ENCODE measurements at regions of chr5 and their contacts with region 1.

Region 1: GRCh38 chr5:115460472-115460871 is 84.1 kb downstream of the FEM1C start:
- DNase-seq: peak; percentile 29
- H3K4me3 Mint-ChIP-seq: no peak overlapping the region
- H3K27ac Mint-ChIP-seq: no peak overlapping the region
- H3K4me1 Mint-ChIP-seq: peaks cover 3% of the 10 kb centered on the region
- H3K27me3 Mint-ChIP-seq: peaks cover 30% of the 10 kb centered on the region

Region 2: DNA sequence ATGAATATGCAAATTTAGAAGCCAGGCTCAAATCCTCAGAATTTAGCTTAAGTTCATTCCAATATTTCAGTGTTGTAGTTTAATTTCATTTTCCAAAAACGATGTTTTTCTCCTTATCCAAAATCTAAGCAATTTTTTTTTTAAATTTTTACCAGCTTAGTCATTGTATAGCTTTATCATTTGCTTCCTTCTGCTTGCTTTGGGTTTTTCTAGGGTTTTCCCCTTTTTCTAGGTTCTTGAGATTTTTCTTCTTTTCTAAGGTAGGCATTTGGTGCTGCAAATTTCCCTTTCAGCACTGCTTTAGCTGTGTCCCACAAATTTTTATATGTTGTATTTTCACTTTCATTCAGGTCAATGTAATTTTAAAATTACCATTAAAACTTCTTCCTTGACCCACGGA is 129.6 kb before region 1 on chr5:
- CTCF ChIA-PET with region 1: no interaction called
- intact Hi-C with region 1: loop called (anchors 1 kb)
- DNase-seq: no peak
- H3K4me3 Mint-ChIP-seq: no peak overlapping the region
- H3K27ac Mint-ChIP-seq: no peak overlapping the region
- H3K4me1 Mint-ChIP-seq: peaks cover 9% of the 10 kb centered on the region
- H3K27me3 Mint-ChIP-seq: peaks cover 20% of the 10 kb centered on the region

Region 3: GRCh38 chr5:115415143-115415491 is 45.4 kb before region 1 on chr5:
- CTCF ChIA-PET with region 1: interaction called, 4 read pairs
- intact Hi-C with region 1: loop called (anchors 2 kb)
- DNase-seq: peak; percentile 7
- H3K4me3 Mint-ChIP-seq: no peak overlapping the region
- H3K27ac Mint-ChIP-seq: no peak overlapping the region
- H3K4me1 Mint-ChIP-seq: peaks cover under 1% of the 10 kb centered on the region
- H3K27me3 Mint-ChIP-seq: peaks cover 10% of the 10 kb centered on the region

Region 4: GRCh38 chr5:115522832-115523403 is 62.4 kb after region 1 on chr5:
- CTCF ChIA-PET with region 1: interaction called, 4 read pairs
- intact Hi-C with region 1: loop called (anchors 2 kb)
- DNase-seq: no peak
- H3K4me3 Mint-ChIP-seq: peak overlapping the region; percentile 11
- H3K27ac Mint-ChIP-seq: peak overlapping the region; percentile 64
- H3K4me1 Mint-ChIP-seq: peaks cover 36% of the 10 kb centered on the region
- H3K27me3 Mint-ChIP-seq: no peaks in the 10 kb centered on the region

Region 5: DNA sequence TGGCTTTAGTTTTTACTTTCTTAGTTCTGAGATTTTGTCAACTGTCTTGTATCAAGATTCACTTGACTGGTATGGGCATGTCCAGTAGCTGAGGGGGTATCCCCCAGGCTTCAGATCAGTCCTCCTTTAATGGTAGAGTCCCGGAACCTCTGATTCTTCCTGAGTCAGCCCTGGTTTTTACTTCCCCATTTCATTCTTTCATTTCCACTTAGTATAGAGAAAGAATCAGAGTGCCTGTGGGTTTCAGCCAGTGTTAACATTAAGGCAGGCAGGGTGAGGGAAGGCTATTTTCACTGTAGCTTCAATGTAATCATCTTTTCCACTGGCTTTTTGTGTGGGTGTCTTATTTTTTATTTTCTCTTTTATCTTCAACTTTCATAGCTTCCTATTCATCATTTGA is 616.0 kb after region 1 on chr5:
- CTCF ChIA-PET with region 1: no interaction called
- intact Hi-C with region 1: loop called (anchors 5 kb)
- DNase-seq: peak; percentile 41
- H3K4me3 Mint-ChIP-seq: no peak overlapping the region
- H3K27ac Mint-ChIP-seq: peak overlapping the region; percentile 17
- H3K4me1 Mint-ChIP-seq: peaks cover 25% of the 10 kb centered on the region
- H3K27me3 Mint-ChIP-seq: peaks cover 3% of the 10 kb centered on the region